Activated CD8-positive, alpha-beta T cell treated with anti-CD3 and anti-CD28 coated beads, Interleukin-2, amount 10 ng/mL, durations not matched to agents 7 days and 5 days (primary cell): ENCODE measurements at regions of chr4 and their contacts with region 1.

Region 1: GRCh38 chr4:17324386-17324830 is 187.5 kb downstream of the QDPR start:
- DNase-seq: peak; percentile 70
- ATAC-seq: peak; percentile 51
- H3K4me3 Mint-ChIP-seq: no peak overlapping the region
- H3K27ac Mint-ChIP-seq: peak overlapping the region; percentile 48
- H3K4me1 Mint-ChIP-seq: peaks cover 15% of the 10 kb centered on the region
- H3K27me3 Mint-ChIP-seq: peaks cover 3% of the 10 kb centered on the region

Region 2: DNA sequence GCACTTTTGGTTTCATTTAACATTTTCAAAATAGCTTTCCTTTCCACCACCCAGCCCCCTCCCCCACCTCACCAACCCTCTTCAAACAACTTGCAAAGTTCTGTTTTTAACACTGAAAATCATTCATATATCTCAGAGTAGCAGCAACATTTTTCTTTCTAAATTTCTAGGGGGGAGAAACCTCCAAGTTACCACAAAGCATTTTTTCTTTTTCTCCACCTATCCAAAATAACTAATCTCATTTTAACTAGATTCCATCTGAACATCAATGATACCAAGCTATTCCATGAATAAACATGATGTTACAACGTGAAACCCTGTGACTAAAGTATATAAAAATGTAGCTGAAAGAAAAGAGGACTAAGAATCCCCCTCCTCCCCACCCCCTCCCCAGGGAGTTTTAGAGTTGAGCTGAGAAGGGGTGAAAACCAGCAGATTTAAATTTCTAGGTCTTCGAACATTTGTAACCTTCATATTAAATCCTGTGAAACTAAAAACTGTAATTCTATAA is 431.2 kb before region 1 on chr4:
- CTCF ChIA-PET with region 1: interaction called, 12 read pairs
- POLR2A ChIA-PET with region 1: no interaction called
- DNase-seq: no peak
- ATAC-seq: no peak
- H3K4me3 Mint-ChIP-seq: peak overlapping the region; percentile 23
- H3K27ac Mint-ChIP-seq: peak overlapping the region; percentile 11
- H3K4me1 Mint-ChIP-seq: peaks cover 52% of the 10 kb centered on the region
- H3K27me3 Mint-ChIP-seq: peaks cover 14% of the 10 kb centered on the region

Region 3: GRCh38 chr4:16926214-16926613 is 398.2 kb before region 1 on chr4:
- CTCF ChIA-PET with region 1: interaction called, 11 read pairs
- POLR2A ChIA-PET with region 1: no interaction called
- DNase-seq: no peak
- ATAC-seq: no peak
- H3K4me3 Mint-ChIP-seq: no peak overlapping the region
- H3K27ac Mint-ChIP-seq: no peak overlapping the region
- H3K4me1 Mint-ChIP-seq: no peaks in the 10 kb centered on the region
- H3K27me3 Mint-ChIP-seq: peaks cover 7% of the 10 kb centered on the region

Region 4: GRCh38 chr4:17170131-17170530 is 154.3 kb before region 1 on chr4:
- CTCF ChIA-PET with region 1: no interaction called
- POLR2A ChIA-PET with region 1: no interaction called
- DNase-seq: no peak
- ATAC-seq: no peak
- H3K4me3 Mint-ChIP-seq: no peak overlapping the region
- H3K27ac Mint-ChIP-seq: no peak overlapping the region
- H3K4me1 Mint-ChIP-seq: no peaks in the 10 kb centered on the region
- H3K27me3 Mint-ChIP-seq: peaks cover 7% of the 10 kb centered on the region

Region 5: DNA sequence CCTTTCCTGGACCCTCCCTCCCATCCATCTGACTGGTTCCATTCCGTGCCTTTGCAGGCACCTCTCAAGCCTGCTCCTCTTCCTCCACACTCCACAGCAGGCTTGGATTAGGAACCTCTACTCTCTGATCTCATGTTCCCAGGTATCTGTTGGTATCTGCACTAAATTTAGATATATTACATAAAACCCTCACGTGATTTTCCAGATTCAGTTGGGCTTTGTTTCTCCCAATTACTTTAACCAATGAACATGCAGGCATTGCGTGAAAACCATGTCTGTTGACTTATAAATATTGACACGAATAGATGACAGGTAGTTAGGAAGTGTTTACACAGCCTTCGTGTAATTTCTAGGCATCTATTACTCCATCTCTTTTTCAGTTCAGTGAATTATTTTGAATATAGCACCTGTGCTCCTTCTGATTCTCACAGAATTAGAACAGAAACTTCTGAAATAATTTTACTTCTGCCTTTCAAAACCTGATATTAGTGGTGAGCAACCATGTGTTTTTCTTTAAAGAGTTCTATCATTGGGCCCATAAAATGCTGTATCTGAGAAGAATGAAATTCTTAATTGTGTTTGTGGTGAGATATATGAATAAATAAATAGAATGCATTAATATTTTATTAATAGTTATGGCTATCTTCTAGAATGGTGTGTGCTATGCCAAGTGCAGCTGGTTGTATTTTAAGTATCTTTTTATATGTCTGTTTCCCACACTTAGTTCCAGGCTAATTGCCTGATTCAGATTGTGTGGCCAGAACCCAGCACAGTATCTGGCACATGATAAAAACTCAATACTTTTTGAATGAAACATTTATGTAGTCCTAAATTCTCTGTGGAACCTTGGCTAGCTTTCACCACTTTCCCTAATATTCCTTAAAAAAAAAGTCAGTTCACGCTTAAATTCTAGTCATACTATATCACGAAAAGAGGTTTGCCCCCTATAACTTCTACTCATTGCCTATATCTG is 117.3 kb before region 1 on chr4:
- CTCF ChIA-PET with region 1: no interaction called
- POLR2A ChIA-PET with region 1: no interaction called
- DNase-seq: no peak
- ATAC-seq: no peak
- H3K4me3 Mint-ChIP-seq: no peak overlapping the region
- H3K27ac Mint-ChIP-seq: no peak overlapping the region
- H3K4me1 Mint-ChIP-seq: no peaks in the 10 kb centered on the region
- H3K27me3 Mint-ChIP-seq: peaks cover 10% of the 10 kb centered on the region

Region 6: DNA sequence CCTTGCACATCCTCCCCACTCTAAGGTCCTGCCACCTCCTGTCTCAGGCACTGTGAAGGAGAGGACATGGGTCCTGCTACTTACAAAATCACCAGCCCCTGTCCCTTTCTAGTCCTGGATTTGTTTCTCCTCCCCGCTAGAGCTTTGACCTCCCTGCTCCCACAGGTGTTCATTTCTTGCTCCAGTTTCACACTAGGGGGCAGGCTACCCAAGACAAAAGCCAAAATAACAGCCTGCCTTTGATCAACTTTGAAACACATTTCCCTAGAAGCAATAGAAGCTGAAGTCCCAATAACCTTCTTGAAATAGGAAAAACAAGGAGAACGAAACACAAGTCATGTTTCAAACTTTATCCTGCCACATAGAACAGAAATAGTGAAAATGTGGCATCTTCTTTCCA is 23.0 kb after region 1 on chr4:
- CTCF ChIA-PET with region 1: interaction called, 10 read pairs
- POLR2A ChIA-PET with region 1: no interaction called
- DNase-seq: peak; percentile 50
- ATAC-seq: peak; percentile 64
- H3K4me3 Mint-ChIP-seq: no peak overlapping the region
- H3K27ac Mint-ChIP-seq: no peak overlapping the region
- H3K4me1 Mint-ChIP-seq: no peaks in the 10 kb centered on the region
- H3K27me3 Mint-ChIP-seq: peaks cover 5% of the 10 kb centered on the region

Region 7: DNA sequence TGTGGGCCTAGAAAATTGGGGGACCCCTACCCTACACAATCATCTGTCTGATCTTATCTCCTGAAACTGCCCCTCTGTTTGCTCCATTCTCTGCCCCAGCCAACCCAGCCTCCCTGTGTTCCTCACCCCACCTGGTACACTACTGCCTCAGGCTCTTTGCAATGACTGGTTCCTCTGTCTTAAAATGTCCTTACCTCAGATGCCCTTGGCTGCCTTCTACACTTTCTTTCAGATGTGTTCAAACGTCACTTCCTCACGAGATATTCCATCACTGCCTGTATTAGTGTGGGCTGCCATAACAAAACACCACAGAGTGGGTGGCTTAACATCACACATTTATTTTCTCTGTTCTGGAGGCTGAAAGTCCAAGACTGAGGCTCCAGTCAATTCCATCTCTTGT is 158.3 kb after region 1 on chr4:
- CTCF ChIA-PET with region 1: no interaction called
- POLR2A ChIA-PET with region 1: no interaction called
- DNase-seq: no peak
- ATAC-seq: no peak
- H3K4me3 Mint-ChIP-seq: no peak overlapping the region
- H3K27ac Mint-ChIP-seq: no peak overlapping the region
- H3K4me1 Mint-ChIP-seq: no peaks in the 10 kb centered on the region
- H3K27me3 Mint-ChIP-seq: no peaks in the 10 kb centered on the region